ENCODE measurements at regions of chr7 and their contacts with region 1.

Region 1: GRCh38 chr7:33062782-33063443 is 337 bp upstream of the NT5C3A start:
- DNase-seq: peak; percentile 96
- H3K4me3 ChIP-seq: peak overlapping the region; percentile 99
- H3K27ac ChIP-seq: peak overlapping the region; percentile 68
- H3K4me1 ChIP-seq: peaks cover 30% of the 10 kb centered on the region
- CTCF ChIP-seq: no peak

Region 2: DNA sequence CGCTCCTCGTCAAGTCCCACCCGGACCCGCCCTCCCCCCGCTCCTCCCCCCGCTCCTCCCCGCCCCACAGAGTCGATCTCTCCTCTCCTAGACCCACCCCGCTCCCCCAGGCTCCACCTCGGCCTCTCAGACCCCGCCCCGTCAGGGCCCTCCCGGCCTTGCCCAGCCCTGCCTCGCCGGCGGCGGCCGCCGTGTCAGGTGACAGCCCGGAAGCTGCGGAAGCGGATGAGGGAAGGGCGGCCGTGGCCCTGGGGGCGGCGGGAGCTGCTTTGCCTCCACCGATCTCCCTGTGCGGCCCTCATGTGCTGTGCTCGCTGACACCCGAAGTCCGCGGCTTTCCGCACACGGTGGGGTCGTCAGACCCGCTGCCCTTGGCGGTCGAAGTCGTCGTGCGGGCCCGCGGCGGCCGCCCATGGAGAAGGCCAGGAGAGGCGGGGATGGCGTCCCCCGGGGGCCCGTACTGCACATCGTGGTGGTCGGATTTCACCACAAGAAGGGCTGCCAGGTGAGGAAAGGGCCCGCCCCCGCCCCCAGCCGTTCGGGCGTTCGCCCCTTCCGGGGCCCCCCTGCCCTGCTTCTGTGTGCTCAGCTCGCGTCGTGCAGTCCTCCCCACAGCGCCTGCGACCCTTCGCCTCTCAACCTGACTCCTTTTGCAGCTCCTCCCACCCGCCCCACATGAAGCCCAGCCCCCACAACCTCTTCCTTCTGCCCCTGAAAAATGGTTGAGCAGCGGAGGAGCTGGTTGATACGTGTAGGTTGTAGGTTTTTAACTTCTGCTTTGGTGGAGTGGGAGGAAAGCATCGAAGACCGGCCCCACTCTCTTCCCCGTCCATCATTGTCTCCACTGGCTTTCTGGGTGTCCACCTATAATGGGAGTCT is 567.4 kb before region 1 on chr7 and contains the start of gene AVL9:
- CTCF ChIA-PET with region 1: no interaction called
- POLR2A ChIA-PET with region 1: no interaction called
- intact Hi-C with region 1: loop called (anchors 5 kb)
- DNase-seq: peak; percentile 97
- H3K4me3 ChIP-seq: peak within 1 kb of the TSS; percentile 82
- H3K27ac ChIP-seq: peak within 1 kb of the TSS; percentile 88
- H3K4me1 ChIP-seq: peaks cover 27% of the 10 kb centered on the region
- CTCF ChIP-seq: no peak
- total RNA-seq, gene AVL9: 23.4 and 36.6 TPM in 2 replicates

Region 3: GRCh38 chr7:33040803-33041516 is 22.0 kb before region 1 on chr7:
- CTCF ChIA-PET with region 1: no interaction called
- POLR2A ChIA-PET with region 1: interaction called, 20 read pairs
- intact Hi-C with region 1: no loop called
- DNase-seq: peak; percentile 91
- H3K4me3 ChIP-seq: peak overlapping the region; percentile 69
- H3K27ac ChIP-seq: peak overlapping the region; percentile 85
- H3K4me1 ChIP-seq: peaks cover 65% of the 10 kb centered on the region
- CTCF ChIP-seq: no peak

Region 4: DNA sequence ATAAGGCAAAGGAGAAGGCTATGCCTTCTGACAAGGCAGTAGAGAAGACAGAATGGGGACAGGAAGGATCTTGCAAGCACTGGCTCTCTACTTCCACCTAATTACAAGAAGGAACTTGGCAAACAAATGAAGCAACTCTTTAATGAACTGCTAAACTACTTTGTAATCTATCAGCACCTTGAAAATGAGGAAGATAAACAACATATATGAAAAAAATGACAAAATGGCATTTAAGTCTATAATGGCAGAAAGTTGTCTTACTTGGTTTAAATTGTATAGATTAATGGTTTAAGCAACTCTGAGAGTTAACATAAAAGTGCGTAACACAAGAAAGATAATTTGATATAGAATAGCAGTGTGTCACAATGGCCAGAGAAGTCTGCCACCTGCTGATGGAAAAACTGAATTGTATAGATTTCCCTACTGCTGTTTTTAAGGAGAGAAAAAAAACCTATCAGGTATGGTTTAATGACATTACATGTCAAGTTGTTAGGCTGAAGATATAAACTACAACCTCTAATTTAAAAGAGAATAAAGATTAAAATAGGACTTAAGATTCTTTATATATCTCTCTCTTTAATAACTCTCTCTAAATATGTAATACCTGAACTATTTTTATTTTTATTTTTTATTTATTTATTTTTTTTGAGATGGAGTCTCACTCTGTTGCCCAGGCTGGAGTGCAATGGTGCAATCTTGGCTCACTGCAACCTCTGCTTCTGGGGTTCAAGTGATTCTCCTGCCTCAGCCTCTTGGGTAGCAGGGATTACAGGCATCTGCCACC is 12.2 kb before region 1 on chr7:
- CTCF ChIA-PET with region 1: no interaction called
- POLR2A ChIA-PET with region 1: interaction called, 22 read pairs
- intact Hi-C with region 1: no loop called
- DNase-seq: peak; percentile 60
- H3K4me3 ChIP-seq: peak overlapping the region; percentile 46
- H3K27ac ChIP-seq: peak overlapping the region; percentile 78
- H3K4me1 ChIP-seq: peaks cover 78% of the 10 kb centered on the region
- CTCF ChIP-seq: peak; percentile 91

Region 5: GRCh38 chr7:33099154-33099940 is 36.4 kb after region 1 on chr7:
- CTCF ChIA-PET with region 1: no interaction called
- POLR2A ChIA-PET with region 1: interaction called, 17 read pairs
- intact Hi-C with region 1: loop called (anchors 2 kb)
- DNase-seq: peak; percentile 74
- H3K4me3 ChIP-seq: peak overlapping the region; percentile 40
- H3K27ac ChIP-seq: peak overlapping the region; percentile 85
- H3K4me1 ChIP-seq: peaks cover 29% of the 10 kb centered on the region
- CTCF ChIP-seq: no peak

Region 6: GRCh38 chr7:33334349-33334748 is 271.4 kb after region 1 on chr7:
- CTCF ChIA-PET with region 1: no interaction called
- POLR2A ChIA-PET with region 1: no interaction called
- intact Hi-C with region 1: no loop called
- DNase-seq: peak; percentile 2
- H3K4me3 ChIP-seq: no peak overlapping the region
- H3K27ac ChIP-seq: no peak overlapping the region
- H3K4me1 ChIP-seq: no peaks in the 10 kb centered on the region
- CTCF ChIP-seq: peak; percentile 62

Measured in OCI-LY7 (cell line).